ENCODE measurements at regions of chr12 and their contacts with region 1.

Region 1: GRCh38 chr12:22529281-22530060 is 14.9 kb downstream of the C2CD5 start:
- DNase-seq: peak in 6 of 9 donors; percentile 26 to 62 (median 51)
- ATAC-seq: peak; percentile 92
- H3K4me3 ChIP-seq: no peak overlapping the region
- H3K4me3 Mint-ChIP-seq: no peak overlapping the region
- H3K27ac ChIP-seq: no peak overlapping the region
- H3K27ac Mint-ChIP-seq: no peak overlapping the region
- H3K4me1 ChIP-seq: no peaks in the 10 kb centered on the region
- H3K4me1 Mint-ChIP-seq: peaks cover 7 to 17% (median 10%) of the 10 kb centered on the region in 7 donors
- H3K27me3 ChIP-seq: no peaks in the 10 kb centered on the region
- H3K27me3 Mint-ChIP-seq: no peaks in the 10 kb centered on the region

Region 2: DNA sequence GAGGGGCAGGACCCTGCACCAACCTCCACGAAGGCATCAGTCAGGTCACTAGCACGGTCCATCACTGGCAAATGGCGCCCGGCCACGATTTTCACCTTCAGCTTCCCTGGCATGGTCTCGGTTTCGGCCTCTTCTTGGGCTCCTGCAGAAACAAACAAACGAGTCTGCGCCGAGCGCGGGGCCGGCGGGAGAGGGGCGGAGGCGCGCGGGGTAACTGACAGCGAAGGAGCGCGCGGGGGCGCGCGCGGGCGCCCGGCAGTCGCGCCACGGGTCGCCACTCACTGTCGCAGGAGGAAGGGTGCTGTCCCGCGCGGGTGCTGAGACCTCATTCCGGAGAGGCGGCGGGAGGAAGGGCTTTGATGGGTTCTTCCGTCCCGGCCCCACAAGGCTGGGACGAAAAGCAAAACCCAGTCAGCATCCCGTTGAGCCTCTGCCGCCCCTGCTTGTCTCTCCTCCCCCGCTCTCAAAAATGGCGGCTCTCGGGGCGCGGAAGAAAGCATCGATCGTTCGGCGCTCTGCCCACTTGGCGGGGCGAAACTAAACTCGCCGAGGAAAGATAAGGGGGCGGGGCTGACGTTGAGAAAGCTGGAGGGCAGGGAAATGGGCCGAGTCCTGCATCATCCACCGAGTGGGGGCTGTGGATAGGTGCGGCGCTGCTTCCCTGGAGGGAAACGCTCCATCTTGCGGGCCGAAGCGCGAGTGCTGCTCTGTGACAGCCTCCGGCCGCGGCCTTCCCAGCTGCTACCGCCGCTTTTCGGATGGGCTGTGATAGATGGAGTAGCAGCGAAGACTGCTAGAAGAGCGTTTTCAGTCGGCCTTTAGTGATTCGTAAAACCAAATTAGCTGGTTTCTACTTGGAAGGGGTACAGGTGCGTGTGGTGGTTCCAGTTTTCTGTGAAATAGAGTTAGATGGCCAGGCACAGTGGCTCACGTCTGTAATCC is 14.8 kb after region 1 on chr12 and contains the start of gene C2CD5:
- CTCF ChIA-PET with region 1: interaction called, 4 read pairs
- POLR2A ChIA-PET with region 1: interaction called, 5 read pairs
- intact Hi-C with region 1: loop called (anchors 1 to 2 kb)
- DNase-seq: peak; percentile 84 to 96 (median 96)
- ATAC-seq: peak; percentile 96
- H3K4me3 ChIP-seq: peak within 1 kb of the TSS; percentile 95
- H3K4me3 Mint-ChIP-seq: peak within 1 kb of the TSS; percentile 91 to 98 (median 92)
- H3K27ac ChIP-seq: peak within 1 kb of the TSS; percentile 79
- H3K27ac Mint-ChIP-seq: peak within 1 kb of the TSS; percentile 94 to 98 (median 95)
- H3K4me1 ChIP-seq: peaks cover 7 to 18% of the 10 kb centered on the region in 2 donors
- H3K4me1 Mint-ChIP-seq: peaks cover 32 to 47% (median 38%) of the 10 kb centered on the region in 7 donors
- H3K27me3 ChIP-seq: no peaks in the 10 kb centered on the region
- H3K27me3 Mint-ChIP-seq: peaks cover 0 to 12% (median 4%) of the 10 kb centered on the region in 5 donors
- total RNA-seq, gene C2CD5: 31.5 to 58.9 (median 47.1) TPM

Region 3: DNA sequence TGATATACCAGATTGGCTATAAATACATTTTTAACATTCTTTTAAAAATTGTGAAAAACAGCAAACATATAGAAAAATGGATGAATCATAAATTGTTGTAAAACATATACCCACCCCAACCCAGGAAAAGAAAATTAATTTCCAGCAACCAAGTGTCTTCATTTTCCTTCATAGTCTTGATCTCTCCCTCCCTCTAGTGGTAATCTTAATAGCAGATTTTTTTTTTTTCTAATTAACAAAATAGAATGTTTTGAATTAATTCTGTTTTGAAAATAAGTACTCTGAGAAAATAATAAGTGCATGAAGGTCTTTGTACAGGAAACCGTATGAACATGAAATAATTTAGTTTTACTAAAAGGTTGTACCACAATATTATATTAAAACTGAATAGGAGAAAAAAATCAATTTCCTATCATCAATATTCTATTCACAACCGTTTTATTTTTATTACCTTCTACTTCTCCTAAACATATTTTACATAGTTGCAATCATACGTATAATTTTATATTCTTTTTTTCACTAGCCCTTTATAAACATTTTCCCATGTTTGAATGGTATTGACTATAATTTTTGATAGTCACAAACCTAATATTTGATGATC is 102.5 kb after region 1 on chr12:
- CTCF ChIA-PET with region 1: interaction called, 14 read pairs
- POLR2A ChIA-PET with region 1: interaction called, 3 read pairs
- intact Hi-C with region 1: loop called (anchors 1 kb)
- DNase-seq: peak in 5 of 9 donors; percentile 25 to 41 (median 30)
- ATAC-seq: peak; percentile 63
- H3K4me3 ChIP-seq: no peak overlapping the region
- H3K4me3 Mint-ChIP-seq: peak overlapping the region in 1 of 10 donors; percentile 10
- H3K27ac ChIP-seq: no peak overlapping the region
- H3K27ac Mint-ChIP-seq: peak overlapping the region in 3 of 9 donors; percentile 4 to 26 (median 22)
- H3K4me1 ChIP-seq: peaks cover 25 to 27% of the 10 kb centered on the region in 2 donors
- H3K4me1 Mint-ChIP-seq: peaks cover 51 to 93% (median 86%) of the 10 kb centered on the region in 7 donors
- H3K27me3 ChIP-seq: no peaks in the 10 kb centered on the region
- H3K27me3 Mint-ChIP-seq: no peaks in the 10 kb centered on the region

Region 4: GRCh38 chr12:22670762-22671161 is 141.3 kb after region 1 on chr12:
- CTCF ChIA-PET with region 1: interaction called, 10 read pairs
- POLR2A ChIA-PET with region 1: no interaction called
- intact Hi-C with region 1: loop called in 1 of 2 experiments (anchors 1 kb)
- DNase-seq: no peak
- ATAC-seq: no peak
- H3K4me3 ChIP-seq: no peak overlapping the region
- H3K4me3 Mint-ChIP-seq: no peak overlapping the region
- H3K27ac ChIP-seq: no peak overlapping the region
- H3K27ac Mint-ChIP-seq: no peak overlapping the region
- H3K4me1 ChIP-seq: no peaks in the 10 kb centered on the region
- H3K4me1 Mint-ChIP-seq: peaks cover 0 to 3% (median 0%) of the 10 kb centered on the region in 7 donors
- H3K27me3 ChIP-seq: no peaks in the 10 kb centered on the region
- H3K27me3 Mint-ChIP-seq: no peaks in the 10 kb centered on the region

Region 5: GRCh38 chr12:22951206-22951605 is 421.7 kb after region 1 on chr12:
- CTCF ChIA-PET with region 1: no interaction called
- POLR2A ChIA-PET with region 1: no interaction called
- intact Hi-C with region 1: no loop called
- DNase-seq: no peak
- ATAC-seq: no peak
- H3K4me3 ChIP-seq: no peak overlapping the region
- H3K4me3 Mint-ChIP-seq: no peak overlapping the region
- H3K27ac ChIP-seq: no peak overlapping the region
- H3K27ac Mint-ChIP-seq: no peak overlapping the region
- H3K4me1 ChIP-seq: no peaks in the 10 kb centered on the region
- H3K4me1 Mint-ChIP-seq: no peaks in the 10 kb centered on the region
- H3K27me3 ChIP-seq: no peaks in the 10 kb centered on the region
- H3K27me3 Mint-ChIP-seq: no peaks in the 10 kb centered on the region

Region 6: DNA sequence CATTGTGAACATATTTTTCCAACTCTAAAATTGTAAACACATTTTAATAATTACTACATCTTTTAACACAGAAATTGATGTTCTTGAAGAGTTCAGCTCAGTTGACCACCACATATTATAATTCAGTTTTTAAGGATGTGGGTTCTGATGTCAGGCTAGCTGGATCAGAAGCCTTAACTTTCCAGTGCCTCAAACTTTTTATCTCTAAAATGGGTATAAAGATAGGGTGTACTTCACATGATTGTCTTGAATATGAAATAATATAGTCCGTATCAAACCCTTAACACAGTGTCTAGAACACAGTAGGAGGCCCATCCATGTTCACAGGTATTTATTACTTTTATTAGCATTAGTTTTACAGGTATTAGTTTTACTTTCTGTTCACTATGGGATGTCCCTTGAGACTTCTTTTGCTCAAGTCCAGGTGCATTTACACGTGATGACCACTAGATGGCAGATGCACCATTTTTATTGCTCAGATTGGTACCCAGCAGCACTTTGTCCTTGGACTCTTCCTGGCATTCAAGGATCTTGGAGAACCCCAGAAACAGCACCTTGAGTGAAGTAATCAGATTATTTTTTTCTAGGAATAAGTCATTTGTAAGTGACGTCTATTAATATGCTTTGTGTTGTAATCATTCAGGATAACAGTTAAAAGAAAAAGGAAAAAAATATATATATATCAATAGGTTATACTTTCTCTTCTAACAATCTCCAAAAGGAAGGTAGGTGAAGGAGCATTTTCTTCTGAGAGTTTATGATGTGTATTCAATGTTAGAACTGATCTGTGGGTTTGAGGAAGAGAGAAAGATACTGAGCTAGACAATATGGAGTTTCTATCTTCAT is 675.7 kb after region 1 on chr12:
- CTCF ChIA-PET with region 1: no interaction called
- POLR2A ChIA-PET with region 1: no interaction called
- intact Hi-C with region 1: loop called in 1 of 2 experiments (anchors 2 kb)
- DNase-seq: peak in 6 of 9 donors; percentile 5 to 29 (median 24)
- ATAC-seq: peak; percentile 70
- H3K4me3 ChIP-seq: no peak overlapping the region
- H3K4me3 Mint-ChIP-seq: no peak overlapping the region
- H3K27ac ChIP-seq: no peak overlapping the region
- H3K27ac Mint-ChIP-seq: no peak overlapping the region
- H3K4me1 ChIP-seq: no peaks in the 10 kb centered on the region
- H3K4me1 Mint-ChIP-seq: no peaks in the 10 kb centered on the region
- H3K27me3 ChIP-seq: no peaks in the 10 kb centered on the region
- H3K27me3 Mint-ChIP-seq: peaks cover 0 to 6% (median 5%) of the 10 kb centered on the region in 5 donors